ENCODE measurements at regions of chr16 and their contacts with region 1.

Region 1: GRCh38 chr16:2882460-2883026 is 472 bp upstream of the FLYWCH2 start:
- DNase-seq: peak; percentile 99
- H3K4me3 ChIP-seq: peak overlapping the region; percentile 86 to 87
- H3K27ac ChIP-seq: peak overlapping the region; percentile 93 to 96
- H3K4me1 ChIP-seq: peaks cover 0 to 17% (median 9%) of the 10 kb centered on the region in 4 donors
- H3K27me3 ChIP-seq: no peaks in the 10 kb centered on the region
- CTCF ChIP-seq: no peak

Region 2: GRCh38 chr16:2905431-2906387 is 23.2 kb after region 1 on chr16:
- intact Hi-C with region 1: loop called (anchors 1 kb)
- DNase-seq: peak; percentile 99 to 100
- H3K4me3 ChIP-seq: peak overlapping the region; percentile 79 to 80
- H3K27ac ChIP-seq: peak overlapping the region; percentile 84 to 98
- H3K4me1 ChIP-seq: peaks cover 0 to 18% (median 12%) of the 10 kb centered on the region in 4 donors
- H3K27me3 ChIP-seq: no peaks in the 10 kb centered on the region
- CTCF ChIP-seq: peak in 1 of 2 experiments; percentile 21

Region 3: DNA sequence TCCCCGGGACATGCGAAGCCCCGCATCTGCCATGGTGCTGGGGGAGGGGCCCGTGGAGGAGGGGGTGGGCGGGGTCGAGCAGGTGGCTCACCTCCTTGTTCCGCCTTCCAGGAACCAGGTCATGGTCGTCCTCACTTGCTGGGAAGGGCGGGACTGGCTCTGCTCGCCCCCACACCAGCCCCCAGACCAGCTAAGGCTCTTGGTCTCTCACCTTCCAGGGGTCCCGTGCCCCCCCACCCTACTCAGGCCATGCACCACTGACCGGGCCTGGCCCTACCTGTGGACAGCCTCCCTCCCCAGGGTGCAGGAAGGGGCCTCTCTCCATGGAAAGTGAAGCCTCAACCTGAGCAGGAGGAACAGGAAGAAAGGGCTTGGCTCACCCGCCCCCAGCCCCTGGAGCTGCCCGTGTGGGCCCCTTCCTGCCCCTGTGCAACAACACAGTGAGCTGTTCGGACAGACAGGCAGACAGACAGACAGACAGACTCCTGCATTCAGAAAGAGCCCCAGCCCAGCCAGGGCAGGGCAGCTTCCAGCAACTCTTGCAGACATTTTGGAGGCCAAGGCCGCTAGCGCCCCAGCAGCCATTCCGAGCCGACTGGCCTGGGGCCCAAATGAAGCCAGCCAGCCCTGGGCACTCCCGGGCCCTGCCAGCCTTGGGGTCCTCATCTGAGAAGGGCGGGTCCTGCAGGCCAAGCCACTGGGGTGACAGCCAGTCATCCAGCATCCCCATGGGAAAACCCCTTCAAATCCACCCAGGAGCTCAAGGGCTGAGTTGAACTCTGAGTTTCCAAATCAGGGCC is 73.4 kb after region 1 on chr16:
- intact Hi-C with region 1: no loop called
- DNase-seq: no peak
- H3K4me3 ChIP-seq: no peak overlapping the region
- H3K27ac ChIP-seq: no peak overlapping the region
- H3K4me1 ChIP-seq: no peaks in the 10 kb centered on the region
- H3K27me3 ChIP-seq: peaks cover 0 to 60% of the 10 kb centered on the region in 2 donors
- CTCF ChIP-seq: no peak

Region 4: DNA sequence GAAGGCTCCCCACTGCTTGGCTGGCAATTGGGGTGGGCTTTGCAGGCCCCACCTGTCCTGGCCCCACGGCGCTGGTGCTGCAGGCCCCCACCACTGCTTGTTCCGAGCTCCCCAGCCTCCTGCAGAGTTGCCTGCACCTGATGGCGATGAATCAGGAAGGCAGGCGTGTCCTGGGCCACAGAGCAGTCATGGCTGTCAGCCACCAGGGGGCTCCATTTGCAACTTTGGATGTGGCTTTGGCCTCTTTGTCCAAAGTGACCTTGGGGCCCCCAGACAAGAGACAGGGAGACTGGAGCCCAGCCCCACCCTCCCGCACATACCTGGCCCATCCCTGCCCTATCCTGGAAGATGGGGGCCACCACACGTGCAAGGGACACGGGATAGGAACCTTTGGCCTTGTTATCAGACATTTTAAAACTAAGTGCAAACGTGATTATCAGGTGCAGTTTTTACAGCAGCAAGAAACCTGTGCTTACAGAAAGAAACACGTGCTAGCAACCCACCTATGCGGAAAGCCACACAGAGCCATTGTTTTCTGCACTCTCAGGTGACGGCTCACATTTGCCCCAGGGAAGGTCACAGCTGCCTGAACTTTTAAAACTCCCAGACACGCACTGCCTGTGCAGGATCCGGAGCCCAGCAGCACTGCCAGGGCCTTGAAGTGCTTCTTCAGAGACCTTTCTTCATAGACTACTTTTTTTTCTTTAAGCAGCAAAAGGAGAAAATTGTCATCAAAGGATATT is 771.9 kb after region 1 on chr16 and contains the start of gene DNASE1:
- intact Hi-C with region 1: no loop called
- DNase-seq: peak; percentile 41 to 76
- H3K4me3 ChIP-seq: no peak within 1 kb of the TSS
- H3K27ac ChIP-seq: no peak within 1 kb of the TSS
- H3K4me1 ChIP-seq: no peaks in the 10 kb centered on the region
- H3K27me3 ChIP-seq: no peaks in the 10 kb centered on the region
- CTCF ChIP-seq: peak; percentile 34 to 54

Measured in tibial artery (tissue), 4 donors.